Activated CD4-positive, alpha-beta memory T cell treated with anti-CD3 and anti-CD28 coated beads, Interleukin-2, amount 10 ng/mL, durations not matched to agents 7 days and 5 days (primary cell): ENCODE measurements at regions of chr1 and their contacts with region 1.

Region 1: GRCh38 chr1:28736450-28737306 is at the start of gene YTHDF2:
- DNase-seq: peak; percentile 98
- H3K4me3 Mint-ChIP-seq: peak within 1 kb of the TSS; percentile 97
- H3K27ac Mint-ChIP-seq: peak within 1 kb of the TSS; percentile 94
- H3K4me1 Mint-ChIP-seq: peaks cover 38% of the 10 kb centered on the region
- H3K27me3 Mint-ChIP-seq: no peaks in the 10 kb centered on the region
- total RNA-seq, gene YTHDF2: 69.9 to 70.9 TPM

Region 2: GRCh38 chr1:28642847-28643635 is 93.6 kb before region 1 on chr1 and contains the start of gene TAF12:
- CTCF ChIA-PET with region 1: interaction called, 73 read pairs
- POLR2A ChIA-PET with region 1: interaction called, 119 read pairs
- DNase-seq: peak; percentile 95
- H3K4me3 Mint-ChIP-seq: peak within 1 kb of the TSS; percentile 96
- H3K27ac Mint-ChIP-seq: peak within 1 kb of the TSS; percentile 96
- H3K4me1 Mint-ChIP-seq: peaks cover 54% of the 10 kb centered on the region
- H3K27me3 Mint-ChIP-seq: no peaks in the 10 kb centered on the region
- total RNA-seq, gene TAF12: 33.8 to 34.0 TPM

Region 3: GRCh38 chr1:28718586-28719331 is 17.9 kb before region 1 on chr1:
- CTCF ChIA-PET with region 1: interaction called, 4 read pairs
- POLR2A ChIA-PET with region 1: interaction called, 36 read pairs
- DNase-seq: no peak
- H3K4me3 Mint-ChIP-seq: no peak overlapping the region
- H3K27ac Mint-ChIP-seq: no peak overlapping the region
- H3K4me1 Mint-ChIP-seq: peaks cover 2% of the 10 kb centered on the region
- H3K27me3 Mint-ChIP-seq: no peaks in the 10 kb centered on the region

Region 4: DNA sequence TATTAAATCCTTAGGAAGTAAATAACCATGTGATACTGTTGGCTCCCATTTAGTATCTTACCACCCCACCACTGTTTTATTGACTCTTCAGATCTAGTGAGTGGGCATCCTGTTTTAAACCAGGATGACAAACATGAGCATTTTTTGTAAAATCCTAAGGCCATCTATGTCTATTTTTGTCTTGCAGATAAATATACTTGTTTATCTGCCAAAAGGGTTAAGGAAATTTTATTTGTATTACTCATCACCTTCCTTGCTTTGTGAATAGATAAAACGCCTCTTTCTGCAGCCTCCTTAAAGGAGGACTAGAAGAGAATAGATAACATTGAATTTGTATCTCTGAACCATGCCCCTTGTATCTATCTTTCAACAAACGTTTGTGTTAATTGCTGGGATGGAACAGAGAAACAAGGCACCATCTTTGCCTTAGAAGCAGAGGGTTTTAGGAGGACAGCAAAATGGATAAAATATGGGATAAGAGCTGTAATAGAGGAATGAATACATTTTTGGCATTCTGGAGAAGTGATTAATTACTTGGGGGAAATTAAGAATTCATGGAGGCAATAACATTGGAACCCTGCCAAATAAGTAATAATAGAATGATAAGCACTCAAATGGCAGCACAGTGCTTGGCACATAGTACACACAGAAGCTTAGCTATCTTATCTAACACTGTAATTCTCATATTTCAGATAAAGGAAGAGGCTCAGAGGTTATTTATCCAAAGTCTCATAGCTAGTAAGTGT is 14.8 kb after region 1 on chr1:
- CTCF ChIA-PET with region 1: interaction called, 11 read pairs
- POLR2A ChIA-PET with region 1: interaction called, 7 read pairs
- DNase-seq: no peak
- H3K4me3 Mint-ChIP-seq: no peak overlapping the region
- H3K27ac Mint-ChIP-seq: no peak overlapping the region
- H3K4me1 Mint-ChIP-seq: peaks cover 39% of the 10 kb centered on the region
- H3K27me3 Mint-ChIP-seq: no peaks in the 10 kb centered on the region

Region 5: DNA sequence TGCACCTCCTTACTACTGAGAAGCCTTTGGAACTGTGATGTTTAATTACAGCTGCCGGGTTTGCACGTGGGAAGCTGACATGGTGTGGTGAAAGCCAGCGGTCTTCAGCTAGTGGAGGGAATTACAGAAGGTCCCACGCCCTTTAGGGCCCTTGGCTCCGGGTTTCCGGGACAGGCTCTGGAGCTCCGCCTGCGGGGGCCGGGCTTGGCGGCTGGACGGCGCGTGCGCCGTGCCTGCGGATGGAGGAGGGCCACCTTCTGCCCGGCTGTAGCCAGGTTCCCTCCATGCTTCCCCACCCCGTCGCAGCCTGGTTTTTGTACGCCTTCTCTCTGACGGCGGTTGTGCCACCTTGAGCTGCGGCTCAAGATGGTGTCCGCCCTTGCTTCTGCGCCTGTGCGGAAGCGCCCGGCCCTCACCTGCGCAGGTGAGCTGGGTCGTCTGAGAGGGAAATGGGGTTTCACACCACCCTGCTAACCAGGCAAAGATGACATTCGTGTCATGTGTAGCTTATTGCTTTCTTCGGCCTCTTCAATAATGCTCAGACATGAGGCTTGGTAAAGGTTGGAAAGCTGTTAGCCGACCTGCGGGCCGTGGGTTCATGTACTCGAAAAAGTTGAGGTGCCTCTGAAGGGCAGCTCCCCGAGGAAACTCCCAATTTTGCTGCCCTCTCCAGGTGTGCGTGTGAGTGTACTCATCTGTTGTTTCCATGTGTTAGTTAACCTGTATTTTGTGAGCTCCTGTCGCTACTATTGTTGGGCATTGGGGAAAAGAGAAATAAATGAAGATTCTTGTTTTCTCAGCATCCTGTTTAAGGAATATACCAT is 38.7 kb after region 1 on chr1:
- CTCF ChIA-PET with region 1: interaction called, 18 read pairs
- POLR2A ChIA-PET with region 1: interaction called, 18 read pairs
- DNase-seq: peak; percentile 71
- H3K4me3 Mint-ChIP-seq: peak overlapping the region; percentile 66
- H3K27ac Mint-ChIP-seq: no peak overlapping the region
- H3K4me1 Mint-ChIP-seq: peaks cover 10% of the 10 kb centered on the region
- H3K27me3 Mint-ChIP-seq: peaks cover 6% of the 10 kb centered on the region

Region 6: GRCh38 chr1:28804071-28804470 is 67.4 kb after region 1 on chr1:
- CTCF ChIA-PET with region 1: no interaction called
- POLR2A ChIA-PET with region 1: no interaction called
- DNase-seq: no peak
- H3K4me3 Mint-ChIP-seq: no peak overlapping the region
- H3K27ac Mint-ChIP-seq: no peak overlapping the region
- H3K4me1 Mint-ChIP-seq: no peaks in the 10 kb centered on the region
- H3K27me3 Mint-ChIP-seq: peaks cover 10% of the 10 kb centered on the region